ENCODE measurements at regions of chr6 and their contacts with region 1.

Region 1: DNA sequence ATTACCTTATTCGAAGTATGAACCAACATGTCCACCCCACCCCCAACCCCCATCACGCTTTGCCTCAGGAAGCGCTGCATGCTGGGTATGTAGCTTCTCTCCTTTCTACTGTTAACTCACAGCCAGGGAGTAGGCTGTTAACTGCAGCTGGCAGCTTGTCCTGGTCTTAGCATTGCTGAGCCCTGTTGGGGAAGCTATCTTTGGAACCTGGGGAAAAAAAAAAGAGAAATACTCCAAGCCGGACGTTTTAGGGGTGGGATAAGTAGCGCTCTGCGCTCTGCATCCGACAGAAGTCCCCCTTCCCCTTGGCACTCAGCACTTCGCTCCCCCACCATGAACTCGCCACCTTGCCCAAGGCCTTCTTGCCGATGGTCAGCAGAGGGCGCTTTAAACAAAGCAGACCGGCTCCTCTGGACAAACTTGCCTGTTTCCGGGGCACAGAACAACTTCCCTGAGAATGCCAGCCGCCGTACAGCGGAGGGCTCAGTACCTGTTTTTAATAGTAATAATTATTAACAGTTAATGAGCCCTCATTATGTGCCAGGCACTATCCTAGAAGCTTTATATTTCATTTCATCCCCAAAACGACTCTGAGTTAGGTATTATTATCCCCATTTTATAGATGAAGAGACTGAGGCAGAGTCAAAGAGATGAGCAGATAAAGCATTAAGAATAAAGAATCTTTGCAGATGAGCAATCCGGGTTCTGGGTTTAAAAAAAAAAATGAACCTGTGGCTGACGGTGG is 35.2 kb upstream of the MDFI start:
- DNase-seq: peak; percentile 82
- H3K4me3 ChIP-seq: no peak overlapping the region
- H3K27ac ChIP-seq: no peak overlapping the region
- H3K4me1 ChIP-seq: no peaks in the 10 kb centered on the region
- H3K27me3 ChIP-seq: no peaks in the 10 kb centered on the region
- CTCF ChIP-seq: peak; percentile 89 to 91
- POLR2A ChIP-seq: no peak

Region 2: GRCh38 chr6:41367700-41368099 is 235.3 kb before region 1 on chr6:
- CTCF ChIA-PET with region 1: interaction called, 22 read pairs
- POLR2A ChIA-PET with region 1: no interaction called
- dilution Hi-C with region 1: no loop called
- intact Hi-C with region 1: loop called (anchors 1 kb)
- DNase-seq: peak; percentile 62
- H3K4me3 ChIP-seq: no peak overlapping the region
- H3K27ac ChIP-seq: no peak overlapping the region
- H3K4me1 ChIP-seq: peaks cover 3% of the 10 kb centered on the region
- H3K27me3 ChIP-seq: peaks cover 27 to 46% of the 10 kb centered on the region in 2 experiments
- CTCF ChIP-seq: peak; percentile 50 to 81
- POLR2A ChIP-seq: no peak

Region 3: GRCh38 chr6:41463062-41463930 is 139.7 kb before region 1 on chr6:
- CTCF ChIA-PET with region 1: interaction called, 26 read pairs
- POLR2A ChIA-PET with region 1: no interaction called
- dilution Hi-C with region 1: no loop called
- intact Hi-C with region 1: no loop called
- DNase-seq: peak; percentile 83
- H3K4me3 ChIP-seq: no peak overlapping the region
- H3K27ac ChIP-seq: no peak overlapping the region
- H3K4me1 ChIP-seq: no peaks in the 10 kb centered on the region
- H3K27me3 ChIP-seq: peaks cover 7% of the 10 kb centered on the region in 2 experiments
- CTCF ChIP-seq: peak; percentile 80 to 86
- POLR2A ChIP-seq: no peak

Region 4: GRCh38 chr6:41591859-41592502 is 11.1 kb before region 1 on chr6:
- CTCF ChIA-PET with region 1: interaction called, 10 read pairs
- POLR2A ChIA-PET with region 1: no interaction called
- dilution Hi-C with region 1: no loop called
- intact Hi-C with region 1: no loop called
- DNase-seq: peak; percentile 73
- H3K4me3 ChIP-seq: no peak overlapping the region
- H3K27ac ChIP-seq: no peak overlapping the region
- H3K4me1 ChIP-seq: no peaks in the 10 kb centered on the region
- H3K27me3 ChIP-seq: no peaks in the 10 kb centered on the region
- CTCF ChIP-seq: peak; percentile 89 to 93
- POLR2A ChIP-seq: no peak

Region 5: DNA sequence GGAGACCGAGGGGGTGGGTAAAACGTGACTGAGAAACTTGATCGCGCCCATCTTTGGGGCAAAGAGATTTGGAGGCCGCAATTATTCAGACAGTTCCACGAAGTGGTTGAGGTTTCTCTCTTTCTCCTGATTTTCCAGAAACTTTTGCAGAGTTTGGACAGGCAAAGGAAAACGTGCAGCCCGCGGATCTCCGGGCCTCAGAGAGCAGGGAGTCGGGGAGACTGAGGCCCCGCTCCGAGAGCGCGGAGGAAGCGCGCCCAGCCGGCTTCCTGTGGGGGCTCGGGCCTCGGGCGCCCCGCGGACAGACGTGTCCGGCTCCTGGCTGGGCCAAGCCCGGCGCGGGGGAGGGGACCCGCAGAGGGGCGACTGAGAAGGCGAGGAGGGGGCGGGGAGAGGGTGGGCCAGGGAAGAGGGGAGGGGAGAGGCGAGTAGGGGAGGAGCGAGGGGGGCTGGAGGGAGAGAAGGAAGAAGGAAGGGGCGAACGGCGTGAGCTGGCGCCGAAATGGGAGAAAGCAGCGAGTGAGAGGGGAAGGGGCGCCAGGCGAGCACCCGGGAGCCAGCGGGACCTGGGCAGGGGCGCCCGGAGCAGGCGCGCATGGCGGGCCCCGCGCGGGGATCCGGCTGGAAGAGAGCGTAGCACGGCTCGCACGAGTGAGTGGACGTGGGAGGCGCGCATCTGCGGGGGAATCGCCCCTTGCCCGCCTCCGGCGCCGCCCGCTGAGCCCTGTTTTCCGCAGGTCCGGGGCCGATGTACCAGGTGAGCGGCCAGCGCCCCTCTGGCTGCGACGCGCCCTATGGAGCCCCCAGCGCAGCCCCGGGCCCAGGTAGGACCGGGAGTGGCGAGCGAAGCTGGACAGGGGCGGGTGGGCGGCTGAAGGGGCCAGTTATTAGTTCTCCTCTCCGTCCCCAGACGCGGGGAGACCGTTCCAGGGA is 35.2 kb after region 1 on chr6 and contains the start of gene MDFI:
- CTCF ChIA-PET with region 1: interaction called, 13 read pairs
- POLR2A ChIA-PET with region 1: interaction called, 9 read pairs
- dilution Hi-C with region 1: no loop called
- intact Hi-C with region 1: loop called (anchors 1 kb)
- DNase-seq: peak; percentile 41
- H3K4me3 ChIP-seq: peak within 1 kb of the TSS; percentile 27 to 66 (median 55)
- H3K27ac ChIP-seq: peak within 1 kb of the TSS; percentile 30
- H3K4me1 ChIP-seq: peaks cover 32% of the 10 kb centered on the region
- H3K27me3 ChIP-seq: no peaks in the 10 kb centered on the region
- CTCF ChIP-seq: no peak
- POLR2A ChIP-seq: no peak
- total RNA-seq, gene MDFI: 32.4 and 45.8 TPM in 2 replicates

Region 6: GRCh38 chr6:41675176-41675770 is 72.2 kb after region 1 on chr6:
- CTCF ChIA-PET with region 1: interaction called, 226 read pairs
- POLR2A ChIA-PET with region 1: no interaction called
- dilution Hi-C with region 1: no loop called
- intact Hi-C with region 1: no loop called
- DNase-seq: no peak
- H3K4me3 ChIP-seq: no peak overlapping the region
- H3K27ac ChIP-seq: no peak overlapping the region
- H3K4me1 ChIP-seq: no peaks in the 10 kb centered on the region
- H3K27me3 ChIP-seq: peaks cover 0 to 10% of the 10 kb centered on the region in 2 experiments
- CTCF ChIP-seq: no peak
- POLR2A ChIP-seq: no peak

Region 7: DNA sequence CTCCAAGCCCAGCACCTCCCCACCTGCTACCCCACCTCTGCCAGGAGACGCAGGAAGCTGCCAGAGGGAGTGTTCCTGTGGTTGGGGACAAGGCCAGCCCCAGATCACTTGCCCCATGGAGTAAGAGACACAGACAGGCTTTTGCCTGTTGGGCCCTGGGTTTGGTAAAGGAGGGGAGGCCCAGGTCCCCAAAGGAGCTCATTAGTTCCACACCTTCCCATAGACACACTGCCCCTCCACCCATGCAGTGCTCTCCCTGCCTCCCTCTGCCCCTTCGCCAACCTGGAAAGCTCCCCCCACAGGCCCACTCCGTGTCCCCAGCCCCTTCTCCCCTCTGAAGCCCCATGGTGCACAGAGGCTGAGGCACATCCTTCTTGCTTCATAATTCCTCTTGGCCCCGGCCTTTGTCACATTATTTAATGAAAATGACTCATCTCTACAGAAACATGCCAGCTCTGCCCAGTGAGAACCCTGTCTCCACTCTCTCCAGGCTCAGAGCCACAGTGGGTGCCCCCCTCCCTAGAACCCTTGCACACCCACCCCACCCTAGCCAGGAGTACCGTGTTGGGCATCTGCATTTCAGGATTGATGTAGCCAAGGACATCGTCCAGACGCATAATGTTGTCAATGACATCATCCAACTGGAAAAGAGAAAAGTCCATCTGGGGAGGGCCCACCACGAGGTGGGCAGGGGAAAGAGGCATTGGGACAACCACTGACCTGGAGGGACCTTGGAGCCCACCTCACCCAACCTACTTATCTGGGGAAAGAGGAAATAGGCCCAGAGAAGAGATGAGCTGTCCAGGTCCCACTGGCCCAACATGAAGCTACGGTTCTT is 86.4 kb after region 1 on chr6:
- CTCF ChIA-PET with region 1: interaction called, 92 read pairs
- POLR2A ChIA-PET with region 1: no interaction called
- dilution Hi-C with region 1: no loop called
- intact Hi-C with region 1: no loop called
- DNase-seq: no peak
- H3K4me3 ChIP-seq: no peak overlapping the region
- H3K27ac ChIP-seq: no peak overlapping the region
- H3K4me1 ChIP-seq: no peaks in the 10 kb centered on the region
- H3K27me3 ChIP-seq: no peaks in the 10 kb centered on the region
- CTCF ChIP-seq: no peak
- POLR2A ChIP-seq: no peak

Measured in endothelial cell of umbilical vein (primary cell).